A673 (cell line): ENCODE measurements at regions of chr9 and their contacts with region 1.

Region 1: GRCh38 chr9:75798505-75798904 is 92.0 kb upstream of the PCSK5 start:
- DNase-seq: no peak
- H3K4me3 ChIP-seq: no peak overlapping the region
- H3K27ac ChIP-seq: no peak overlapping the region
- H3K4me1 ChIP-seq: no peaks in the 10 kb centered on the region
- H3K27me3 ChIP-seq: no peaks in the 10 kb centered on the region
- CTCF ChIP-seq: no peak

Region 2: GRCh38 chr9:75071530-75072124 is 726.9 kb before region 1 on chr9:
- CTCF ChIA-PET with region 1: no interaction called
- POLR2A ChIA-PET with region 1: no interaction called
- intact Hi-C with region 1: no loop called
- DNase-seq: no peak
- H3K4me3 ChIP-seq: no peak overlapping the region
- H3K27ac ChIP-seq: no peak overlapping the region
- H3K4me1 ChIP-seq: no peaks in the 10 kb centered on the region
- H3K27me3 ChIP-seq: no peaks in the 10 kb centered on the region
- CTCF ChIP-seq: no peak

Region 3: GRCh38 chr9:75930190-75930589 is 131.7 kb after region 1 on chr9:
- CTCF ChIA-PET with region 1: no interaction called
- POLR2A ChIA-PET with region 1: interaction called, 14 read pairs
- intact Hi-C with region 1: no loop called
- DNase-seq: no peak
- H3K4me3 ChIP-seq: no peak overlapping the region
- H3K27ac ChIP-seq: no peak overlapping the region
- H3K4me1 ChIP-seq: no peaks in the 10 kb centered on the region
- H3K27me3 ChIP-seq: peaks cover 14% of the 10 kb centered on the region
- CTCF ChIP-seq: no peak